CD8-positive, alpha-beta memory T cell (primary cell): ENCODE measurements at regions of chr16 and their contacts with region 1.

Region 1: GRCh38 chr16:2752035-2752849 is at the start of gene SRRM2:
- DNase-seq: peak; percentile 89 to 96 (median 95)
- H3K4me3 ChIP-seq: peak within 1 kb of the TSS; percentile 98
- H3K4me3 Mint-ChIP-seq: peak within 1 kb of the TSS; percentile 87 to 98 (median 91)
- H3K27ac ChIP-seq: peak within 1 kb of the TSS; percentile 98
- H3K27ac Mint-ChIP-seq: peak within 1 kb of the TSS; percentile 97 to 99 (median 98)
- H3K4me1 ChIP-seq: peaks cover 50% of the 10 kb centered on the region
- H3K4me1 Mint-ChIP-seq: peaks cover 50 to 64% (median 59%) of the 10 kb centered on the region in 3 donors
- H3K27me3 ChIP-seq: no peaks in the 10 kb centered on the region
- H3K27me3 Mint-ChIP-seq: peaks cover 0 to 10% of the 10 kb centered on the region in 2 donors
- total RNA-seq, gene SRRM2: 517 to 529 TPM

Region 2: DNA sequence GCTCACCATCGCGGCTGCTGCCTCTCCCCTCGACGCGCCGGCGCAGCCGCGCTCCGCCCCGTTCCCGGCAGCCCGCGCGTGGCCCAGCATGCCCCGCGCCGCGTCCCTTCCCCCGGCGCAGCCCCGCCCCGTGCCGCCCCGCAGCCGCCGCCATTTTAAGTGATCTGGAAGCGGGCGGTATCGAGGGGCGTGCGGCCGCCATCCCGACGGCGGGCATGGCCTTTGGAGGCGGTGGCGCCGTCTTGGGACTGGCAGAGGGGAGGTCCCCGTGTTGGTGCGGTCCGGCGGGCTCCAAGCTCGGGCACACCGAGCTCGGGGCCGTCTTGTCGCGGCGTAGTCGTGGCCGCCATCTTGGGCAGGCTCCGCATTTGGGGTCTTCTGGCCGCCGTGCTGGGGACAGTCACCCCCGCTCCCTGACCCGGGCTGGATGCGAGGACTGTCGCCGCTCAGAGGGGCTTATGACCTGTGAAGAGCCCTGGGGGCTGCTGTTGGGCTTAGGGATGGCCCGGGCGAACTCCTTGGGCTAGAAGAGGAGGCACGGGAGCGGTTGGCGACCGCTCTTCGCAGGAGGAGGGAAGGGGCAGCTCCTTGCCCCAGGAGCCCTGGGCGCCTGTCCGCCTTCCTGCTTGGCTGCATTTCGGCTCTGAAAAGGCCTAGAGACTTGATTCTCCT is 25.1 kb after region 1 on chr16 and contains the start of gene ELOB:
- CTCF ChIA-PET with region 1: interaction called, 5 read pairs
- POLR2A ChIA-PET with region 1: interaction called, 55 read pairs
- DNase-seq: peak; percentile 84 to 91 (median 84)
- H3K4me3 ChIP-seq: peak within 1 kb of the TSS; percentile 97
- H3K4me3 Mint-ChIP-seq: peak within 1 kb of the TSS; percentile 95 to 98 (median 97)
- H3K27ac ChIP-seq: peak within 1 kb of the TSS; percentile 96
- H3K27ac Mint-ChIP-seq: peak within 1 kb of the TSS; percentile 98 to 100 (median 98)
- H3K4me1 ChIP-seq: peaks cover 32% of the 10 kb centered on the region
- H3K4me1 Mint-ChIP-seq: peaks cover 24 to 62% (median 36%) of the 10 kb centered on the region in 3 donors
- H3K27me3 ChIP-seq: no peaks in the 10 kb centered on the region
- H3K27me3 Mint-ChIP-seq: peaks cover 0 to 1% of the 10 kb centered on the region in 2 donors
- total RNA-seq, gene ELOB: 322 to 338 TPM